A549 (cell line): ENCODE measurements at regions of chr19 and their contacts with region 1.

Region 1: DNA sequence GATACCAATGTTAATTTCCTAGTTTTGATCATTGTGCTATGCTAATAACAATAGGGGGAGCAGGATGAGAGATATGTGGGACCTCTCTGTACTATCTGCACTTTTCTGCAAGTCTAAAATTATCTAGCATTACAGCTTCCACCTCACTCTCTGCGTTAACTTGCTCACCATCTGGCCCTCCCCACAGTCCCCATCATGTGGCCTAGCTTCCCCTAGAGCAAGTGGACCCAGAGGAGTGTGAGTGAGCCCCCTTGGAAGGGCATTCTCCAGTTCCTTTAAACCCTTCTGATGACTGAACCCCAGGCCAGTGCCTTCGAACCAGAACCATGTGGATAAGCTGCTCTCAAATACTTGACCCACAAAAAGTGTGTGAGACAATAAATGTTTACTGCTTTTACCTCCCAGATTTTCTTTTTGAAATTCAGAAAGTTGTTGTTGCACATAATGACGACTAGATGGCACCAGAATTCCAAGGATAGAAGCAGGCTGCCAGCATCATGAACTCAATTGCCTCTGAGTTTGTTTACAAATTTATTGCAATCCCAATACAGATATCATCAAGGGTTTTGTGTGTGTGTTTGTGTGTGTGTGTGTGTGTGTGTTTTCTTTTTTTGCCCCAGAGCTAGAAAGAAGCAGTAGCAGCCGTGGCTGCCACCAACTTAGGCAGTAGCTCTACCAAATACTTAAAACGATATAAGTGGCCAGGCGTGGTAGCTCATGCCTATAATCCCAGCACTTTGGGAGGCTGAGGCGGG is 49.0 kb upstream of the ZNF780A start:
- DNase-seq: peak; percentile 77 to 79
- ATAC-seq: peak; percentile 59 to 71
- H3K4me3 ChIP-seq: no peak overlapping the region
- H3K27ac ChIP-seq: no peak overlapping the region
- H3K4me1 ChIP-seq: no peaks in the 10 kb centered on the region
- CTCF ChIP-seq: peak; percentile 99
- EP300 ChIP-seq: no peak
- POLR2A ChIP-seq: no peak
- RAD21 ChIP-seq: peak; percentile 100

Region 2: GRCh38 chr19:40128991-40129390 is 10.7 kb before region 1 on chr19:
- CTCF ChIA-PET with region 1: interaction called, 58 read pairs
- POLR2A ChIA-PET with region 1: no interaction called
- DNase-seq: no peak
- ATAC-seq: no peak
- H3K4me3 ChIP-seq: no peak overlapping the region
- H3K27ac ChIP-seq: no peak overlapping the region
- H3K4me1 ChIP-seq: no peaks in the 10 kb centered on the region
- CTCF ChIP-seq: no peak
- EP300 ChIP-seq: no peak
- POLR2A ChIP-seq: no peak
- RAD21 ChIP-seq: no peak

Region 3: DNA sequence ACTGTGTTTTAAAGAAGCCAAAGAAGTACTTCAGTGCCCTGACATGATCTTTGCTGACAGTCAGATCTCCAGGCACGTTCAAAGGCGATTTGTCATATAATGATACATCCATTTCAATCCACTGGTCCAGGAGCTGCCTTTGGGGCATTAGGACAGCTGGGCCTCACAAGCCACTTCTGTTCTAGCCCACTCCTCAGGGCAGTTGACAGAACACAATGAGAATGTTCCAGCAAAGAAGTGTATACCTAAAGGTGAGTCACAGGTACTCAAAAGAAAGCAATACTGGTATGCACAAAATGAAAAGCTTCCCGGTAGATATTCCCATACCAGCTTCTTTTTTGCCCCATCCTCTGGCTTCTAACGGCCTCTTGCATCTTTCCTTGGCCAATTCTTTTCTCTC is 39.0 kb after region 1 on chr19:
- CTCF ChIA-PET with region 1: interaction called, 24 read pairs
- POLR2A ChIA-PET with region 1: no interaction called
- DNase-seq: no peak
- ATAC-seq: peak in 1 of 2 experiments; percentile 24; a peak in 2 of 6 replicates
- H3K4me3 ChIP-seq: no peak overlapping the region
- H3K27ac ChIP-seq: no peak overlapping the region
- H3K4me1 ChIP-seq: no peaks in the 10 kb centered on the region; the same call in 2 of the 3 replicates
- CTCF ChIP-seq: no peak
- EP300 ChIP-seq: no peak
- POLR2A ChIP-seq: no peak
- RAD21 ChIP-seq: no peak

Region 4: DNA sequence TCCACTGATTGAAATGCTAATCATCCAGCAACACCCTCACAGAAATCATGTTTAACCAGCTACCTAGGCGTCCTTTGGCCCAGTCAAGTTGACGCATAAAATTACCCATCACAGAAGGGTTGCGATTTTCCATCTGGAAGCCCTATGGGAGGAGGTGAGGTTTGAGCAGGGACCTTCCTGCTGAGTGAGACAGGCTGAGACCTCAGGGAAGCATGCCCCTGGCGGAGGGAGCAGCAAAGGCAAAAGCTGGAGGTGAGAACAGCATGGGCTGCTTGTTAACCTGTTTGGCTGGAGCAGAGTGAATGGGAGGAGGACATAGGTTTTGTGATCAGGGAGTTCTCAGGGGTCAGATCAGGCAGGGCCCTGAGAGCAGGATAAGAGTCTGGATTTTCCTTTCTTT is 71.2 kb after region 1 on chr19:
- CTCF ChIA-PET with region 1: interaction called, 129 read pairs
- POLR2A ChIA-PET with region 1: no interaction called
- DNase-seq: no peak
- ATAC-seq: peak in 1 of 2 experiments; percentile 26; a peak in 2 of 6 replicates
- H3K4me3 ChIP-seq: no peak overlapping the region
- H3K27ac ChIP-seq: no peak overlapping the region
- H3K4me1 ChIP-seq: no peaks in the 10 kb centered on the region
- CTCF ChIP-seq: no peak
- EP300 ChIP-seq: no peak
- POLR2A ChIP-seq: no peak
- RAD21 ChIP-seq: no peak

Region 5: DNA sequence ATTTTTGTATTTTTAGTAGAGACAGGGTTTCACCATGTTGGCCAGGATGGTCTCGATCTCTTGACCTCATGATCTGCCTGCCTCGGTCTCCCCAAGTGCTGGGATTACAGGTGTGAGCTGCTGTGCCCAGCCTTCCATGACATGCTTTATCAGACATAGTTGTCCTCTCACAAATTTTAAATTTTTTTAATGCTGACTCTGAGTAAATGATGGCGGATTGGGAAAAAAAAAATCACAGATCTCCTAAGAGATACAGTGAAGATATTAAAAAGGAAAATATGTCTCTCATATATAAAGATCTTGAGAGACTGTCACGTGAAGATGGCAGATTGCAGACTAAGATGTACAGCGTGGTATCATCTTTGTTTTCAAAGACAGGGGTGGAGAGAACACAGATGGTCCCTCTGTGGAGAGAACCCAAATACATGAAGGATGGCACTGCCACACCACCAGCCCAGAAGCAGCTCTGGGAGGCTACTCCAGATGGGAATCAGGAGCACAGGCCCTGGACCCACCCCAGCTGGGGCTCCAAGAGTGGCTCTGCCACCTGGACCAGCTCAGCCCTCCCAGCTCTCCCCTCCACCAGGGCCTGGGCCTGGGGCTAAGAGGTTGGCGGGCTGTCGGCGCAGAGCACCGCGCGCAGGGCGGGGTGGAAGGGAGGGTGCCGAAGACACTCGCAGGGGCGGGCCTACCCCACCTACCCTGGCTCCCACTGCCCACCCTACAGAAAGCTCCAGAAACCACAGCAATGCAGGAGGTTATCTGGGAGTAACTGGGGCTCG is 106.8 kb after region 1 on chr19:
- CTCF ChIA-PET with region 1: interaction called, 12 read pairs
- POLR2A ChIA-PET with region 1: no interaction called
- DNase-seq: no peak
- ATAC-seq: no peak; a peak in 2 of 6 replicates
- H3K4me3 ChIP-seq: no peak overlapping the region
- H3K27ac ChIP-seq: no peak overlapping the region
- H3K4me1 ChIP-seq: no peaks in the 10 kb centered on the region
- CTCF ChIP-seq: no peak
- EP300 ChIP-seq: no peak
- POLR2A ChIP-seq: no peak
- RAD21 ChIP-seq: no peak

Region 6: DNA sequence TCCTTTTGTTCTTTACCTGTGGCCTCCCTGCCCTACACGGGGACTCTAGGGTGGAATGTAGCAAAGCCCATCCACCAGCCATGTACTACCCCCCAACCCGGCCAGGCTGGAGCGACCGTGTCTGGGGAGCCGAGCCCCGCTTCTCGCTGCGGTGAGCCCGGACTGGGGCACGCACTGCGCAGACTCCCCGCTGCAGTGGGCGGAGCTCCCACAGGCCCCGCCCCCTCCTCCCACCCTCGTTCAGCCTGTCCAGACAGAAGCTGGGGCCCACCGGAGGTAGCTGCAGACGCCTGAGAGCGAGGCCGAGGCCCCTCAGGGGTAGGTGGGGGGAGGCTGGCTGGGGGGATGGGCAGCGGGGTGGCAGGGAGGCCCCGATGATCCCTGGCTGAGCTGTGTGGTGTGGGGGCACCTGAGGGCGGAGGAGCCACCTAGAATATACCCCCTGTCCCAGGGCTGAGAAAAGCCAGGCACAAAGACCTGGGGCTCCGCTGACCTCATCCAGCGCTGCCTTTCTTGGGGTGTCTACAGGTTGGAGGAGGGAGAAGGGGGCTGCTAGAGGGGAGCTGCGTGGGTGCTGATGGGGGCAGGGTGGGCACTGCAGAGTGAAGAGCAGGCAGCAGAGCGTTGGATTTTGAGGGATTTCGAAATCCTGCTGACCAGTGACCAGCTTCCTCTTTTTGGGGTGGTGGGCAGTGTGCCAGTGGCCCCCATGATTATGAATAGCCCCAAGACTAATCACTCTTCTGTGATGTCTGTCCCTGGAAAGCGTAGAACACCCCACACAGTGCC is 226.1 kb after region 1 on chr19:
- CTCF ChIA-PET with region 1: interaction called, 13 read pairs
- POLR2A ChIA-PET with region 1: no interaction called
- DNase-seq: peak; percentile 70 to 96
- ATAC-seq: peak; percentile 72 to 90
- H3K4me3 ChIP-seq: peak overlapping the region; percentile 31
- H3K27ac ChIP-seq: peak overlapping the region; percentile 30 to 78
- H3K4me1 ChIP-seq: peaks cover 16% of the 10 kb centered on the region
- CTCF ChIP-seq: no peak
- EP300 ChIP-seq: no peak
- POLR2A ChIP-seq: peak; percentile 87
- RAD21 ChIP-seq: no peak

Region 7: DNA sequence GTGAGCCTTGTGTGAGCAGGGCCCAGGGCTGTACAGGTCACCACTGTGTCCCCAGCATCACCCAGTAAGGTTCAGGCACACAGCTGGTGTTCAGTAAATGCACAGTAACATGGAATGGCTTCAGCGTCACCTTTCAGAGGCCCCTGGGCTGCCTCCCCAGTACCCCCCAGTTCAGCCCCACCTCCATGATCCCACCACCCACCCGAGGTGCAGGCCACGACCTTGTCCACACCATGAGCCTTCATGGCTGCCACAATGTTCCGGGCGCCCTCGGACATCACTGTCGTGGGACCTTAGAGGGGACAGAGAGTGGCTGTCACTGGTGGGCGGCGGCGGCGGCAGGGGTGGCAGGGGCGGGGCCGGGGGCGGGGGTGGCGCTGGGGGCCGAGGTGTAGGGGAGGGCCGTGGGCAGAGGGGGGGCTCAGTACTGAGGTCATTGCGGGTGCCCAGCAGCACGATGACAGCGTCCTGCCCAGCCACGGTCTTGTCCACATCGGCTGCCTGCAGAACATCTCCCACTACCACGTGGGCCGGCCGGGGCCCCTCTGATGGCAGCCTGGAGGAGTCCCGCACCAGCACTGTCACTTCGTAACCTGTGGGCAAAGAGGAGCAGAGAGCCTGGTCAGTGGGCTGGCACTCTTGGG is 318.4 kb after region 1 on chr19:
- CTCF ChIA-PET with region 1: no interaction called
- POLR2A ChIA-PET with region 1: no interaction called
- DNase-seq: no peak
- ATAC-seq: no peak
- H3K4me3 ChIP-seq: no peak overlapping the region
- H3K27ac ChIP-seq: no peak overlapping the region
- H3K4me1 ChIP-seq: peaks cover 11% of the 10 kb centered on the region
- CTCF ChIP-seq: no peak
- EP300 ChIP-seq: no peak
- POLR2A ChIP-seq: no peak
- RAD21 ChIP-seq: no peak